ENCODE measurements at regions of chr9 and their contacts with region 1.

Region 1: GRCh38 chr9:103574056-103574455 is 520.1 kb upstream of the SMC2 start:
- DNase-seq: no peak
- H3K4me3 Mint-ChIP-seq: no peak overlapping the region
- H3K27ac Mint-ChIP-seq: no peak overlapping the region
- H3K4me1 Mint-ChIP-seq: no peaks in the 10 kb centered on the region
- H3K27me3 Mint-ChIP-seq: no peaks in the 10 kb centered on the region
- CTCF ChIP-seq: no peak

Region 2: DNA sequence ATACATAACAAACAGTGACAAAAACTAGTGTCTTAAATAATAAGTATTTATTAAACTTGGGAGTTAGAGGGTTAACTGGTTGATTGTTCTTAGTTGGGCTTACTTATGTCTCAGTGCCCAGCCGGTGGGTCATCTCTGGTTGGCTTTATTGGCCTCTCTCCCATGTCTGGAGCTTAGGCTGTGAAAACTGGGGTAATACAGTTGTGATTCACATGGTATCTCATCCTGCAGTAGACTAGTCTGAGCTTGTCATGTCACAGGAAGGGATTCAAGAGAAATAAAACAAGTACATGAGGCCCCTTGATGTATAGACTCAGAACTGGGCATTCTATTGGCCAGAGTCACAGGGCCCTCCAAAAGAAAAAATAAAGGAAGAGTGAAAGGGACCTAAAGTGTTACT is 53.7 kb after region 1 on chr9:
- CTCF ChIA-PET with region 1: no interaction called
- intact Hi-C with region 1: loop called (anchors 10 kb)
- DNase-seq: no peak
- H3K4me3 Mint-ChIP-seq: no peak overlapping the region
- H3K27ac Mint-ChIP-seq: no peak overlapping the region
- H3K4me1 Mint-ChIP-seq: no peaks in the 10 kb centered on the region
- H3K27me3 Mint-ChIP-seq: no peaks in the 10 kb centered on the region
- CTCF ChIP-seq: no peak

Measured in Calu3 (cell line).